RWPE1 (cell line): ENCODE measurements at regions of chr11 and their contacts with region 1.

Region 1: DNA sequence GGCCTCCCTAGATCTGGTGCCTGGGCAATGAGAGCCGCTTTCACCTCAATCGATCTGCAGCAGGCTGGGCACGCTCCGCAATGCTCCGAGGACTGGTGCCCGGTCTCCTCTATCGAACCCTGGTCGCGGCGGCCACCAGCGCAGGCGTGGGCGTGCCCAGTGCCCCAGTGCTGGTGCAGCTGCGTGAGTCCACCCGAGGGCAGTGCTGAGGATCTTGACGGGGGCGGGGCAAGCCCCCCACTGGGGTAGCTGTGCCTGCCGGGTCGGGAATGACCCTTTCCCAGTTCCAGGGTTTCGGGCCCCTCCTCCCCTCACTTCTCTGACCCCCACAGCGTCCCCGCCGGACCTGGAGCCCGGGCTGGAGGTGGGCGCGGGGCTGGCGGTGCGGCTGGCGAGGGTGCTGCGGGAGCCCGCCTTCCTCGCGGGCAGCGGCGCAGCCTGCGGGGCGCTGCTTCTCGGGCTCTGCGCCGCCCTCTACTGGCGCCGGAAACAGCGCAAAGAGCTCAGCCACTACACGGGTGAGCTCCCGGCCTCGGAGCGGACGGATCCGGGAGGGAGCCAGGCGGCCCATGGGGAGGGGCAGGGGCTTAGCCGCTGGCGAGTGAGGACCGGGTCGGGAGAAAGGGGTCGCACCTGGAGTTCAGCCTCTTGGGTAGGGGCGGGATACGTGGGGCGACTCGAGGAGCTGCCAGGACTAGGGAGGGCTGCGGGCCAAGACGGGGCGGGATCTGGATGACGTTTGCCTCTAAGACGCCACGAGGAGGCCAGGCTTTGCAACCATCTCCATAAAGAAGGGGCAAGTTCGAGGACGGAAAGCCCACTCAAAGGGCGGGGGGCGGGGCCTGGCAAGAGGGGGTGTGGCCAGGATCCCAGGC is 10.9 kb downstream of the ROBO3 start:
- DNase-seq: peak; percentile 85
- H3K27ac ChIP-seq: peak overlapping the region; percentile 86
- CTCF ChIP-seq: peak; percentile 89

Region 2: GRCh38 chr11:124829986-124830385 is 46.2 kb before region 1 on chr11:
- CTCF ChIA-PET with region 1: no interaction called
- POLR2A ChIA-PET with region 1: no interaction called
- DNase-seq: no peak
- H3K27ac ChIP-seq: no peak overlapping the region
- CTCF ChIP-seq: no peak

Region 3: DNA sequence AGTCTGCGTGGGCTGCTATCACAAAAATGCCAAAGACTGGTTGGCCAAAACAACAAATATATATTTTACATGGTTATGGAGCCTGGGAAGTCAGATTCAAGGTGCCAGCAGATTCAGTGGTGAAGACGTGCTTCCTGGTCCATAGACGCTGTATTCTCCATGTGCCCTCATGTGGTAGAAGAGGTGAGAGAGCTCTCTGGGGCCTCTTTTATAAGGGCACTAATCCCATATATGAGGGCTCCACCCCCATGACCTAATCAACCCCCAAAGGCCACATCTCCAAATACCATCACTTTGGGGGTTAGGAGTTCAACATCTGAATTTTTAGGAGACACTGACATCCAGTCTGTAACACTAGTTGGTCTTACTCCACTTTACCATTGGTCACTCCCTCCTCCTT is 20.7 kb before region 1 on chr11:
- CTCF ChIA-PET with region 1: no interaction called
- POLR2A ChIA-PET with region 1: no interaction called
- DNase-seq: no peak
- H3K27ac ChIP-seq: no peak overlapping the region
- CTCF ChIP-seq: no peak

Region 4: DNA sequence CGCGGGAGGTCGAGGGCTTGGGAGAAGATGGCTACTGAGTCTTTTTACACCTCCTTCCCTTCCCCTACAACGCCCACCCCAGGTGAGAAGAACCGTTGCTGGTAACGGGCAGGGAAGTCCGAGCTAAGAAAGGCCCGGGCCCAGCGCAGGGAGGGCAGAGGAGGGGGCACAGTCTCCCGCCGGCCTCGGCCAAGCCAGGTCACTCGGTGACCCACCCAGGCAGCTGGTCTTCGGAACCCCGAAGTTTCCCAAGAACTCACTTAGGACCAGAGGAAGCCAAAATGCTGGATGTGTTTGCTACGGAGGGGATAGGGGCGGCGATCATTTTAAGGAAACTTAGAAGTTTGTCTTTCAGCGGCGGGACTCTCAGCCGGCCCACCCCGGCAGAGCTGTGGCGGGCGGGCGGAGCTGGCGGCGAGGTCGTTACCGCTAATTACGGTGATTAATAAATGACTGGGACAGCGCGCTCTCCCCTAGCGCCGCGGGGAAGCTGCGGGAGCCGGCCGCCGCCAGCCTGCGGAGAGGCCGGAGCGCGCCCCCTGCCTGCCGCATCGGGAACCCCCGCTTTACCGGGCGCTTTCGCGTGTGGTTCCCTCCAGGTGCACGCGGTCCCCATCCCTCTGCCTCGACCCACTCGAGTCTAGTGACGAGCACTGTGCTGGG is 10.1 kb before region 1 on chr11:
- CTCF ChIA-PET with region 1: interaction called, 13 read pairs
- POLR2A ChIA-PET with region 1: interaction called, 4 read pairs
- DNase-seq: peak; percentile 49
- H3K27ac ChIP-seq: no peak overlapping the region
- CTCF ChIP-seq: peak; percentile 67

Region 5: DNA sequence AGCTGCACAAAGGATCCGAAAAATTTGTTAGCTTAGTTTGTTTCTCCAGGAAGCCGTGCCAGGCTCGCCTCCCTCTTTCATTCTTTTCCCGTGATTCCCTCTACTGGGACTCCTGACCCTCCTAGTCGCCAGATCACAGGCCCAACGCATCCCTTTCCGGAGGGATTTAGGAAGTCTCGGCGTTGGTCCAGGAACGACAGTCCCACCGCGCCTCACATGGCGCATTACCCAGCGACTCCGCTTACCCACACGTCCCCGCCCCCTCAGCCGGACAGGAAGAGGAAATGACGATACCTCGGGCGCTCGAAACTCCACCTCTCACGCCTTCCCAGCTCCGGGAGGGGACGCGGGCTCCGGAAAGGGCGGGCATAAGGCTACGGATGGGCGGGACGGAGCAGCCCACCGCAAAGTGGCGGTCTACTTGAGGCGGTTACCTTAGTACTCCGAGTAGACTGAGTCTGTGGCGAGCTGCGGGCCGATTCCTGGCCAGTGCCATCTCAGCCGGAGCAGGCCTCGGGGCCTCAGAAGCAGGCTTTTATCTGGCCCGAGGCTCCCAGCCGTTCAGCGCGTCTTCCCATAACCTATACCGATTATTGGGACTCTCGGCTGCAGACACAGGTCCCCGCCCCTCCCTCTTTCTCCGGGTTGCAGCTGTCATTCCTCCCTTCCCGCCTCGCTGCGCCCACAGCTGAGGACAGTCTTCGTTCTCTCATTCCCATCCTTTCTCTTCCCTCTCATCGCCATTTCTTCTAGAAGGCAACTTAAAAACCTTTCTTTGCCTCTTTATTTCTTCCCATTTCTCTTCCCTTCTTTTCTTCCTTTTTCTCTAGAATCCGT is 77.8 kb after region 1 on chr11 and contains the start of gene CCDC15:
- CTCF ChIA-PET with region 1: interaction called, 11 read pairs
- POLR2A ChIA-PET with region 1: interaction called, 11 read pairs
- DNase-seq: peak; percentile 97
- H3K27ac ChIP-seq: peak within 1 kb of the TSS; percentile 84
- CTCF ChIP-seq: no peak